PC-3 (cell line): ENCODE measurements at regions of chr5 and their contacts with region 1.

Region 1: GRCh38 chr5:125412561-125413495 is 666.4 kb upstream of the ZNF608 start:
- DNase-seq: peak; percentile 56
- ATAC-seq: peak; percentile 51
- H3K4me3 ChIP-seq: peak overlapping the region; percentile 30; the same call in 1 of the 2 replicates
- H3K27ac ChIP-seq: 0 out of 2 replicates have a peak overlapping the region, but pooled peaks have one; percentile 5
- H3K4me1 ChIP-seq: peaks cover 53% of the 10 kb centered on the region
- H3K27me3 ChIP-seq: no peaks in the 10 kb centered on the region
- CTCF ChIP-seq: peak; percentile 50

Region 2: DNA sequence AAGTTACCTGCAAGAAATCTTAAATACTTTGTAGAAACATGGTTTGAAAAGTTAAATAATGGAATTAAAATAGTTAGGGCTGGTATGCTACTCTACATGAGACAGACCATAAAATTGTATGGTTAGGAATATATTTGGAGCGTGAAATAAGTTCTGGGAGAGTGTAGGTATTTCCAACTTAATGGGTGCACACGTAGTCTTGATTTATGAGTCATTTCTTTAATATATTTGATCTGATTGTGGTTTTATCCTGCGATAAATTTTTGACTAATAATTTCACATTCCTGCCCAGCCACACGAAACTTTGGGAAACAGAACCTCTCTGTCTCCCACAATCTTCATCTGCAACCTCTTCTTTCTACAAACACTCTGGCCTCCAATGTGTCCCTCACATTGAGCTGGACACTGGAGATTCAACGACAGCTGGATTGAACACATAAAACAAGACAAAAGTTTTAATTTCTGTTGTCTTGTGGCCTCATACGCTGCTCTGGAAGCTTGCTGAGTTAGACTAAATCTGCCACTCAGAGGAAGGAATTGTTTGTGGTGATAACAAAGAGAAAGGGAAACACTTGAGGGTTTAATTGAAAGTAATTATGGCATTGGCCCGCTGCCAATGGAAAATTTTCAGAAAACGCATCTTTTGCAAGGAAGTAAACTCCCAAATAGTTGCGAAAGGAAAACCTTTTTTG is 464.6 kb before region 1 on chr5:
- CTCF ChIA-PET with region 1: no interaction called
- POLR2A ChIA-PET with region 1: no interaction called
- intact Hi-C with region 1: loop called (anchors 2 kb)
- DNase-seq: peak; percentile 60
- ATAC-seq: peak; percentile 83
- H3K4me3 ChIP-seq: peak overlapping the region; percentile 22; the same call in 1 of the 2 replicates
- H3K27ac ChIP-seq: peak overlapping the region; percentile 90
- H3K4me1 ChIP-seq: peaks cover 30% of the 10 kb centered on the region
- H3K27me3 ChIP-seq: no peaks in the 10 kb centered on the region
- CTCF ChIP-seq: no peak

Region 3: DNA sequence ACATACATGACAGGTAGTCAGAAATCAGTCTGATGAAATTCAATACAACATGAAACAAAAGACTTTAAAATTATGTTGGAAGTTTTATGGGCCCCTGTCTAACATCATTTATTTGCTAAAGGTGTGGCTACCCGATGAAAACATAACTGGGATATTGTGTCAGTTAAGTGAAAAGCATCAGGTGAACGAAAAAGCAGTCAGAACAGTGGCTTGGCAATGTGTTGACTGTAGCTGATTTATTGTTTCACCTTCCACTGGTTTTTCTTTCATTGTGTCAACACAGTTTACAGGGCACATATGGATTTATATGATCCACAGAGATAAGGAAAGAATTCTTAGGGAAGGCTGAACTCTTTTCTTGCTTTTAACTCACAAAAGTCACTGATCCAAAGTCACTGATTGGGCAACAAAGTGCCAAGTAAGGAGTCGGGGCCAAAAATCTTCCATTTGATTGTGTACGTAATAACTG is 236.8 kb before region 1 on chr5:
- CTCF ChIA-PET with region 1: no interaction called
- POLR2A ChIA-PET with region 1: no interaction called
- intact Hi-C with region 1: loop called (anchors 1 kb)
- DNase-seq: peak; percentile 87
- ATAC-seq: peak; percentile 94
- H3K4me3 ChIP-seq: no peak overlapping the region
- H3K27ac ChIP-seq: peak overlapping the region; percentile 79
- H3K4me1 ChIP-seq: peaks cover 21% of the 10 kb centered on the region
- H3K27me3 ChIP-seq: no peaks in the 10 kb centered on the region
- CTCF ChIP-seq: no peak

Region 4: GRCh38 chr5:125311743-125312142 is 101.1 kb before region 1 on chr5:
- CTCF ChIA-PET with region 1: no interaction called
- POLR2A ChIA-PET with region 1: no interaction called
- intact Hi-C with region 1: loop called (anchors 2 kb)
- DNase-seq: peak; percentile 86
- ATAC-seq: peak; percentile 89
- H3K4me3 ChIP-seq: no peak overlapping the region
- H3K27ac ChIP-seq: peak overlapping the region; percentile 76
- H3K4me1 ChIP-seq: peaks cover 21% of the 10 kb centered on the region
- H3K27me3 ChIP-seq: no peaks in the 10 kb centered on the region
- CTCF ChIP-seq: no peak

Region 5: GRCh38 chr5:125634216-125634835 is 221.5 kb after region 1 on chr5:
- CTCF ChIA-PET with region 1: no interaction called
- POLR2A ChIA-PET with region 1: no interaction called
- intact Hi-C with region 1: no loop called
- DNase-seq: peak; percentile 18
- ATAC-seq: no peak
- H3K4me3 ChIP-seq: no peak overlapping the region
- H3K27ac ChIP-seq: no peak overlapping the region
- H3K4me1 ChIP-seq: no peaks in the 10 kb centered on the region
- H3K27me3 ChIP-seq: no peaks in the 10 kb centered on the region
- CTCF ChIP-seq: no peak

Region 6: GRCh38 chr5:125835293-125836172 is 422.7 kb after region 1 on chr5:
- CTCF ChIA-PET with region 1: no interaction called
- POLR2A ChIA-PET with region 1: no interaction called
- intact Hi-C with region 1: loop called (anchors 5 kb)
- DNase-seq: peak; percentile 21
- ATAC-seq: no peak; the same call in 1 of the 2 replicates
- H3K4me3 ChIP-seq: no peak overlapping the region
- H3K27ac ChIP-seq: no peak overlapping the region
- H3K4me1 ChIP-seq: no peaks in the 10 kb centered on the region
- H3K27me3 ChIP-seq: no peaks in the 10 kb centered on the region
- CTCF ChIP-seq: peak; percentile 44